ENCODE measurements at regions of chr11 and their contacts with region 1.

Region 1: GRCh38 chr11:127420139-127420538 is 419.6 kb upstream of the KIRREL3 start:
- DNase-seq: no peak
- ATAC-seq: no peak
- H3K4me3 ChIP-seq: no peak overlapping the region
- H3K27ac ChIP-seq: no peak overlapping the region
- H3K4me1 ChIP-seq: no peaks in the 10 kb centered on the region
- H3K27me3 ChIP-seq: peaks cover 0 to under 1% (median 0%) of the 10 kb centered on the region in 3 donors
- CTCF ChIP-seq: no peak

Region 2: GRCh38 chr11:127157225-127157624 is 262.9 kb before region 1 on chr11:
- intact Hi-C with region 1: loop called in 1 of 2 experiments (anchors 5 kb)
- DNase-seq: no peak
- ATAC-seq: no peak
- H3K4me3 ChIP-seq: no peak overlapping the region
- H3K27ac ChIP-seq: no peak overlapping the region
- H3K4me1 ChIP-seq: no peaks in the 10 kb centered on the region
- H3K27me3 ChIP-seq: peaks cover 0 to 2% (median 0%) of the 10 kb centered on the region in 3 donors
- CTCF ChIP-seq: no peak

Region 3: GRCh38 chr11:127521413-127521812 is 101.3 kb after region 1 on chr11:
- intact Hi-C with region 1: no loop called
- DNase-seq: no peak
- ATAC-seq: no peak
- H3K4me3 ChIP-seq: no peak overlapping the region
- H3K27ac ChIP-seq: no peak overlapping the region
- H3K4me1 ChIP-seq: no peaks in the 10 kb centered on the region
- H3K27me3 ChIP-seq: no peaks in the 10 kb centered on the region
- CTCF ChIP-seq: no peak

Measured in psoas muscle (tissue), 8 donors.